Head of caudate nucleus (tissue), 42 donors: ENCODE measurements at regions of chr10 and their contacts with region 1.

Region 1: DNA sequence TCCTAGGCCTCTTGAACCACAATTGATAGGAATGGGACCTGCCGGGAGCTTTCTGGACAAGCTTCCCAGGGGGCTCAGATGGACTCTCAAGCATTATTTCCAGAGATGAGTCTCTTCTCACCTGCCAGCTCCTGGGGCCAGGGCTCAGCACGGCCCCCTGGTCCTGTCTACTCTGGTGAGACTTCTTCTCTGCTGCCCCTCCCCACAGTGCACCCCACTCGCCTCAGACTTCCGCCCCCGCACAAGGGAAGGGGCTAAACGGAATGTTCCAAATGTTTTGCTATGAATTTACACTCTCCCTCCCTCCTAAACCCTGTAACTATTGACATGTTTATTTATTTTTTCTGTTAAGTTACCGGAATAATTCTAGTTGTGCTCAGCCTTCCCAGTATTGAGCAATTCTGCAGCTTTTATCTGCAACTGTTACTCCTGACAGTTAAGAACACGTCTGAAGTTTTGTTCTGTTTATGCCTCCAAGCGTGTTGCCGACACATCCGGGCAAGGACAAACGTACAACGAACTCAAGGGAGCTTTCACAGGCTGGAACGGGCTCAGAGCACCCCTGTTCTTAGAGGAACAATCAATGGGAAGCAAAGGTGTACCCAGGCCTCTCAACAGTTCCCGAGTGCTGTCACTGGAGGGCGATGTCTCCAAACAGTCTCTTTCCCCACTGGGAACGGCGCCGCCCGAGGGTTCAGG is 55.2 kb downstream of the FHIP2A start:
- DNase-seq: peak; percentile 62 to 92 (median 80)

Region 2: GRCh38 chr10:115129752-115130151 is 253.0 kb after region 1 on chr10:
- intact Hi-C with region 1: loop called (anchors 5 kb)
- DNase-seq: no peak